ENCODE measurements at regions of chr7 and their contacts with region 1.

Region 1: DNA sequence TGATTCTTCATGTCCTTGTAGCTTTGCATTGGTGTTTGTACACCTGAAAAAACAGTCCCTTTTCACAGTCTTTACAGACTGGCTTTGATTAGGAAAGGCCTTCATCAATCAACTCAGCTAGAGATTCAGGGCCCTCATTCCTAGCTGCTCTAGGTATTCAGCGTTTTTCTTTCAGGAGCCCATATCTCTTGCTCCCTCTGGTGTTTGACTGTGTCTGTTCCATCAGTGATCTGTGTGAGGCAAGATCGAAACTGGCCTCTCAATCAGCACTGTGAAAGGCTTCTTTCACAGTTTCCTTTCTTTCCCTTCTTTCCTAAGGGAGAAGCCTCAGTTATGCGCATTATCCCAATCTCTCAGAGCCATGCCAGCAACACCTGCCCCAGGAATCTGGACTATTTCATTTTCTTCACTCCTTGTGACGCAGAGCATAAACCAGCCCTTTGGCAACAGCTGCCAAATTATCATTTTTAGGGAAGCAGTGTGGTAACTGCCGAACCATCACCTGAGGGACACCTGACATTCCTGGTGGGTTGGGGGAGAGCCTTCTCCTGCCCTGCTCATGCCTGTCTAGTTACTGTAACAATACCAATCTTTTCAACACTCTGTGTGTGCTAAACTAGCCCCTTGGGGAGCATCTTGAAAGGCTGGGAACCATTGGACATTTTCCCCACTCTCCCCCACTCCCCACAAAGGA is 75.7 kb upstream of the CCDC71L start:
- DNase-seq: peak; percentile 80
- H3K4me3 ChIP-seq: peak overlapping the region; percentile 7 to 34 (median 22)
- H3K27ac ChIP-seq: peak overlapping the region; percentile 77
- H3K4me1 ChIP-seq: peaks cover 17% of the 10 kb centered on the region
- H3K27me3 ChIP-seq: no peaks in the 10 kb centered on the region
- CTCF ChIP-seq: peak; percentile 81 to 84

Region 2: GRCh38 chr7:106285051-106285854 is 451.4 kb before region 1 on chr7:
- CTCF ChIA-PET with region 1: no interaction called
- dilution Hi-C with region 1: no loop called
- in situ Hi-C with region 1: no loop called
- intact Hi-C with region 1: loop called (anchors 5 kb)
- DNase-seq: peak; percentile 100
- H3K4me3 ChIP-seq: peak overlapping the region; percentile 50 to 93 (median 60)
- H3K27ac ChIP-seq: peak overlapping the region; percentile 98
- H3K4me1 ChIP-seq: peaks cover 17% of the 10 kb centered on the region
- H3K27me3 ChIP-seq: no peaks in the 10 kb centered on the region
- CTCF ChIP-seq: no peak

Region 3: DNA sequence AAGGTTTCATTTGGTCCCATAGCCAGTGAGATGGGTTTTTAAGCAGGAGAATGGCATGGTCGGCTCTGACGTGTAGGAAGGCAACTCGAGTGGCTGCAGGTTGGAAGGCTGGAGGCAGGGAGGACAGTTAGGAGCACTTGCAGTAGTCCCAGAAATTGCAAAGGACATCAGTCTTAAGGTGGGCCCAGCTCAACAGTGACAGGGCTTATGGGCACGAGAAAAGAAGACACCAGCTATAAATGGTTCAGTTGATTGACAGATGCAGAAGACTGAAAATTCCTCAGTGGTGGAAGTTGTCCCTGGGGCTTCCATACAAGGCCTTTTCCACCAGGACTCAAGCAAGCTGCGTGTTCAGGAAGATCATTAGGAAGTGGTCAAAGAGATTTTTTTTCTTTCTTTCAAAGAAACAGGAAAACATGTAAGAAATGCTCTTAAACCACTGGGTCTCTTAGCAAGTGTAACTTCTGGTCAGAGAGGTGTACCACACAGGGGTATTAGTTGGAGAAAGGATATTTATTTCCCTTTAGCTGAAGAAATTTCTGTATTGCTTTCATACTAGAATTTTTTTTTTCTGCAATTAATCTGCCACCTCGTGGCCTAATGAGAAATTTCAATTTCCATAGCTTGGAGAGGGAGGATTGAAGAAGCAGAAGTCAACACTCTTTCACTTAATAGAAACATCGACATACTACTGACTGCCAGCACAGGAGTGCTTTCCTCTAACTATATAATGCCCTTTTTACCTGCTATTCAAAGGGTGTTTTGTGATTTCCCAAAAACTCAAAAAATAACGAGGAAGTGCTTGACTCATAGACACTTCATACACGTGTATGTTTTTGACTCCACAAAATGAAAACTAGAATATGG is 274.4 kb before region 1 on chr7:
- CTCF ChIA-PET with region 1: no interaction called
- dilution Hi-C with region 1: no loop called
- in situ Hi-C with region 1: no loop called
- intact Hi-C with region 1: loop called (anchors 1 kb)
- DNase-seq: peak; percentile 50
- H3K4me3 ChIP-seq: no peak overlapping the region
- H3K27ac ChIP-seq: no peak overlapping the region
- H3K4me1 ChIP-seq: peaks cover 22% of the 10 kb centered on the region
- H3K27me3 ChIP-seq: no peaks in the 10 kb centered on the region
- CTCF ChIP-seq: peak; percentile 39 to 52

Region 4: DNA sequence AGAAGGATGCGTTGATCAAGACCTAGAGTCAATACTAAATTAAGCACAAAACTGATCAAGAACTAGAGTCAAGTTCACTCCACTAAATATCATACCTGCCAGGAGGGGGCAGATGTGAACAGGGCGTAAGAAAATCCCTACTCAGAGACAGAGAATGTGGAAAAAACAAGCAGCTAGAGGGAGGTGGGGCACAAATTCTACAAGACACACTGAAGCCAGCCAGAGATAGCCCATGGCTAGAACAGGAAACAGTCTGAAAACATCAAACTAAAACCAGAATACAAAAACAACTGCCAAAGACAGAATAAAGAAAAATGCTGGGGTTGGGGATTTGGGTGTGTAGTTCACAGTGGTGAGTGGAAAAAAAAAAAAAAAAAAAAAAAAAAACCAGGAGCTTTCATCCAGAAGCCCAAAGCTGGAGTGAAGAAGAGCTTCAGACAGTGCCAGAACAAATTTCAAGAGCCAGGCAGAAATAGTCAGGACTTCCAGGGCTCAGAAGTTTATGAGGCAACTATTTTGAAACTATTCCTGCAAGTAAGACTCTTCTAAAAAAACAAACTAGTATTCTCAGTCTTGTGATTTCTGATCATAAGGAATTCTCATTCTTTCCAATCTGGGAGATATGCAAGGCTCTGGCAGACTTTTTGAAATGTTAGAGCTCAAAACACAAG is 194.0 kb before region 1 on chr7:
- CTCF ChIA-PET with region 1: interaction called, 37 read pairs
- dilution Hi-C with region 1: no loop called
- in situ Hi-C with region 1: loop called (anchors 5 kb)
- intact Hi-C with region 1: loop called (anchors 1 kb)
- DNase-seq: peak; percentile 70
- H3K4me3 ChIP-seq: no peak overlapping the region
- H3K27ac ChIP-seq: no peak overlapping the region
- H3K4me1 ChIP-seq: no peaks in the 10 kb centered on the region
- H3K27me3 ChIP-seq: no peaks in the 10 kb centered on the region
- CTCF ChIP-seq: peak; percentile 68 to 81

Region 5: DNA sequence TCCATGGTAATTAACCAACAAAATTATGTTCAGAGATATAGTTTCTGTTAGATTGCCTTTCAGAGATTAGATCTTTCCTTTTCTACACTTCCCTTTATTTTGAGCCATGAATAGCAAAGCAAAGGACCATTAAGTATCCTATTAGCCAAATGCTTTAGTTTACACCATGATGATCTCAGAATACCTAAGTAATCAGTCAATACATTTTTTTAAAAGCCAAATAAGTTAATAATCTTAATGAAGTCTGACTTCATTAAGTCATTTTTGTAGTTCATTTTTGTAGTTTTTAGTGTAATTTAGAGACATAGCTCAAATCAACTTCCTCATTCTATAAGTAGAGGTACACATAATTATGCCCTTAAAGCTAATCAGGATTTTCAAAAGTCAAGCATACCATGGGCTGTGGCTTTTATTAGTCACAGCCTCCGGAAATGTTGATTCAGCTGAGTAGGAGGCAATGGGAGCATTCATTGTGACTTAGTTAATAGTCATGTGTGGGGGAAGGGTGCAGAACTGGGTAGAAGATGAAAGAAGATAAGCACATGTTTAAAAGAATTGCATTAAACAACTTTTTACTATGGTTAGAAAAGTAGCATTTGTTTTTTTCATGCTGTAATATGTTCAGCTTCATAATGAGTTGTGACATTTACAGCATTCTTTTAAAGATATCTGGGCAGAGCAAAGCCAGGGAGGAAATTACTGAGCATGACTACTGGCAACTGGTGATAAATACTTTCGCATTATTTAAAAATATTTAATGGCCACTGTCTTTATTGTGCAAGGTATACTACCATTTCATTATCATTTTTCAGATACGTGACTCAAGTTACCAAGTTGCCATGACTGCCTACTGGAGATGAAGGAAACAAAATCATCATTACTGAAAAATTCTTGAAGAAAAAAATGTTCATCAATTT is 18.4 kb before region 1 on chr7:
- CTCF ChIA-PET with region 1: interaction called, 4 read pairs
- dilution Hi-C with region 1: no loop called
- in situ Hi-C with region 1: no loop called
- intact Hi-C with region 1: loop called (anchors 2 kb)
- DNase-seq: peak; percentile 95
- H3K4me3 ChIP-seq: no peak overlapping the region
- H3K27ac ChIP-seq: peak overlapping the region; percentile 98
- H3K4me1 ChIP-seq: peaks cover 23% of the 10 kb centered on the region
- H3K27me3 ChIP-seq: no peaks in the 10 kb centered on the region
- CTCF ChIP-seq: no peak

Region 6: GRCh38 chr7:106757846-106758245 is 21.2 kb after region 1 on chr7:
- CTCF ChIA-PET with region 1: no interaction called
- dilution Hi-C with region 1: no loop called
- in situ Hi-C with region 1: no loop called
- intact Hi-C with region 1: no loop called
- DNase-seq: no peak
- H3K4me3 ChIP-seq: no peak overlapping the region
- H3K27ac ChIP-seq: no peak overlapping the region
- H3K4me1 ChIP-seq: no peaks in the 10 kb centered on the region
- H3K27me3 ChIP-seq: no peaks in the 10 kb centered on the region
- CTCF ChIP-seq: no peak

Region 7: GRCh38 chr7:106840342-106840741 is 103.7 kb after region 1 on chr7:
- CTCF ChIA-PET with region 1: no interaction called
- dilution Hi-C with region 1: no loop called
- in situ Hi-C with region 1: no loop called
- intact Hi-C with region 1: no loop called
- DNase-seq: peak; percentile 51
- H3K4me3 ChIP-seq: no peak overlapping the region
- H3K27ac ChIP-seq: no peak overlapping the region
- H3K4me1 ChIP-seq: no peaks in the 10 kb centered on the region
- H3K27me3 ChIP-seq: peaks cover 6% of the 10 kb centered on the region
- CTCF ChIP-seq: no peak

Region 8: GRCh38 chr7:106938803-106939202 is 202.1 kb after region 1 on chr7:
- CTCF ChIA-PET with region 1: no interaction called
- dilution Hi-C with region 1: no loop called
- in situ Hi-C with region 1: no loop called
- intact Hi-C with region 1: no loop called
- DNase-seq: no peak
- H3K4me3 ChIP-seq: no peak overlapping the region
- H3K27ac ChIP-seq: no peak overlapping the region
- H3K4me1 ChIP-seq: no peaks in the 10 kb centered on the region
- H3K27me3 ChIP-seq: no peaks in the 10 kb centered on the region
- CTCF ChIP-seq: no peak

Measured in mammary epithelial cell (primary cell).